ENCODE measurements at regions of chr12 and their contacts with region 1.

Region 1: GRCh38 chr12:52884526-52885293 is 20.2 kb downstream of the KRT8 start:
- DNase-seq: peak; percentile 87
- H3K4me3 Mint-ChIP-seq: no peak overlapping the region
- H3K27ac Mint-ChIP-seq: no peak overlapping the region
- H3K4me1 Mint-ChIP-seq: peaks cover 7% of the 10 kb centered on the region
- H3K27me3 Mint-ChIP-seq: peaks cover 2% of the 10 kb centered on the region

Region 2: DNA sequence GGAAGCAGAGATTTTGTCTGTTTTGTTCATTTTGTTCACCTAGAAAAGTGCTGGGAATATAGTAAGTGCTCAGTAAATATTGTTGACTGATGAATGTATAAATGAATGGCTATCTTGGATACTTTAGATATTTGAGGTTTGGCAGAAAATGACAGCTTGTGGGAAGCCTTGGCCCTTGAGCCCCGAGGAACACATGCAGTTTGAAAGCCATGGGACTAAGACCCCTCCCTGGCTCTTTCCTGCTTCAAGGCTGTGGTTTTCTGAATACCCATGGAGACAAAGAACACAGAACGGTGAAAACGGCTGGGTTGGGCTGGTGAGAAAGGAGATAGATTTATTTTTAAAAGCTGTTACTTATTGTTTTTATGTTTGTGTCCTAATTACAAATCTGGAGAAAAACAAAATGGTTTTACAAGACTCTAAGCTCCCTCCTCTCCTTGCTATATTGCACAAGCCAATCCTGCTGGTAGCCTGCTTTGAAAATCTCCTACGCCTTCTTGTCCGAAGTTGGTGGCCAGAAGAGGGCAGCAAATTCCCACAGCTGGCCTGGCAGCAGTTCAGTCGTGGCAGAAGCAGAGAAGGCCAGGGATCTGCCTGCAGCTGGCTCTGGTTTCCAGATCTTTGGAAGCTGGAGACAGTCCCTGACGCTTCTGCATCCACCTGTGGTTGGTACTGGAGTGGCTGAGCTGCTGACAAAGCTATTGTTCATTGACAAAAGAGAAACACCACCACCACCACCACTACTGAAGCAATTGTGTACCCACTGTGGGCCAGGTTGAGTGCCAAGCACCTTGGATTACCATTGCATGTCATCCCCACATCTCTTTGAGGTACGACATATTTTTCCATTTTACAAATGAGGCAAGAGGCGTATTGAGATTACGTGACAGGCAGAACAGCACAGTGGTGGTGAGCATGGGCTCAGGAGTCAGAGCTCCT is 512.2 kb before region 1 on chr12:
- CTCF ChIA-PET with region 1: interaction called, 39 read pairs
- POLR2A ChIA-PET with region 1: no interaction called
- intact Hi-C with region 1: loop called (anchors 5 kb)
- DNase-seq: peak; percentile 68
- H3K4me3 Mint-ChIP-seq: no peak overlapping the region
- H3K27ac Mint-ChIP-seq: no peak overlapping the region
- H3K4me1 Mint-ChIP-seq: no peaks in the 10 kb centered on the region
- H3K27me3 Mint-ChIP-seq: peaks cover 15% of the 10 kb centered on the region

Region 3: DNA sequence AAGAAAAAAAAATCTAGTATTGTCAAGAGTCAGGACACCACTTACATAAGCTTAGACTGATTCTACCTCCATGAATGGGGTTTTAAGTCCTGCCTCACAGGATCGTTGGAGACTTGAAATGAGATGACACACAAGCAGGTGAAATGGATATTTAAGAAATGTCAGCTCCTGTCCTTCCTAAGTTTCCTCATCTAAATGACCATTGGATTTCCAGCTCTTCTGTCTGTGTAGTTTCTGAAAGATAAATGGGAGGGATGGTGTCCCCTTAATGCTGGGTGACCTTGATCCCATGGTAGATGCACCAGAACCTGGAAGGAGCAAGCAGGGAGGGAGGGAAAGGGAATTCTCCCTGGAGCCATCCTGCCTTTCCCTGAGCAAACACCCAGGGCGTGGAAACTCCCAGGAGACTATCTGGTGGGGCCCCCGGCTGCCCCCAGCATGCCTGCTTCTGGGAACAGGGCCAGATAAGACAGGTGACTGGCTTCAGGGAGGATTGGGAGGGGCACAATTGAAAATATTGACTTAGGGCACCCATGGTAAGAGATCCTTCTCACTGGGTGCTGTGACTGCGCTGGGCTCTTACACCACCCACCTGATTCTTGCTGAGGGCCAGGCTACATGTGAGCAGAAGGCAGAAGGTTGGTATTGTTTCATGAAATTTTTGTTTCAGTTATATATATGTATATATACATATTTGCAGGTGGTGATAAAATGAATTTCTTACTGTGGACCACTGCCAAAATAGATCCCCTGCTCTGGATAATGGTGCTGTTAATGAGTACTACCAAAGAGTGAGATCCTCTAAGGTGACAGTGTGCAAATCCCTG is 10.6 kb after region 1 on chr12:
- CTCF ChIA-PET with region 1: interaction called, 39 read pairs
- POLR2A ChIA-PET with region 1: no interaction called
- intact Hi-C with region 1: no loop called
- DNase-seq: no peak
- H3K4me3 Mint-ChIP-seq: no peak overlapping the region
- H3K27ac Mint-ChIP-seq: no peak overlapping the region
- H3K4me1 Mint-ChIP-seq: no peaks in the 10 kb centered on the region
- H3K27me3 Mint-ChIP-seq: peaks cover 4% of the 10 kb centered on the region

Region 4: DNA sequence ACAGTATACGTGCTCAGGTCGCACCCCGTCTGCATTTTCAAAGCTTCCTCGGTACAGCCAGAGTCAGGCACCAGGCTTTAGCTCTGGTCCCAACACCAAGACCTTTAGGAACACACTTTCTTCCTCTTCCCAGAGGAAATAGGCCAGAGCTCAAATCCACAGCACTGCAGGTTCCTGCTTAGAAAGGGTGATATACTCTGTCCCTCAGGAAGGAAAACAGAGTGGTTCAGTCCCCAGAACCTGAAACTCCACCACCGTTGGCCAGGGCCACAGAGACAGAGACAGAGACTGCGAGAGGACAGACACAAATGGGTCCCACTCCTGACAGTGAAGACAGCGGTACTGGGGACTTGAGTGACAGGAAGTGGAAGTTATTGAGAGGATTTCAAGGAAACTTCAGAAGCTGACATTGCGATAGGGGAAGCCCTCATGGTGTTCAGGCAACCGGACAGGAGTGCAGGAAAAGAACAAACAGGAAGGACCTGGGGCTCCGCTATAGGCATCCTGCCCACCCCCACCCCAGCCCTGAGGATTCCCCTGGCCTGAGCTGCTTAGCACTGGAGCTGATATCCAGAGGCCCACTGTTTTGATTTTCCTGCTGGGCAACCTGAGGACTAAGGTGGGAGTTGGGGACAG is 25.7 kb after region 1 on chr12:
- CTCF ChIA-PET with region 1: interaction called, 14 read pairs
- POLR2A ChIA-PET with region 1: no interaction called
- intact Hi-C with region 1: no loop called
- DNase-seq: no peak
- H3K4me3 Mint-ChIP-seq: no peak overlapping the region
- H3K27ac Mint-ChIP-seq: no peak overlapping the region
- H3K4me1 Mint-ChIP-seq: no peaks in the 10 kb centered on the region
- H3K27me3 Mint-ChIP-seq: no peaks in the 10 kb centered on the region

Region 5: GRCh38 chr12:52942066-52942900 is 57.6 kb after region 1 on chr12:
- CTCF ChIA-PET with region 1: interaction called, 24 read pairs
- POLR2A ChIA-PET with region 1: no interaction called
- intact Hi-C with region 1: no loop called
- DNase-seq: no peak
- H3K4me3 Mint-ChIP-seq: no peak overlapping the region
- H3K27ac Mint-ChIP-seq: no peak overlapping the region
- H3K4me1 Mint-ChIP-seq: no peaks in the 10 kb centered on the region
- H3K27me3 Mint-ChIP-seq: no peaks in the 10 kb centered on the region

Region 6: DNA sequence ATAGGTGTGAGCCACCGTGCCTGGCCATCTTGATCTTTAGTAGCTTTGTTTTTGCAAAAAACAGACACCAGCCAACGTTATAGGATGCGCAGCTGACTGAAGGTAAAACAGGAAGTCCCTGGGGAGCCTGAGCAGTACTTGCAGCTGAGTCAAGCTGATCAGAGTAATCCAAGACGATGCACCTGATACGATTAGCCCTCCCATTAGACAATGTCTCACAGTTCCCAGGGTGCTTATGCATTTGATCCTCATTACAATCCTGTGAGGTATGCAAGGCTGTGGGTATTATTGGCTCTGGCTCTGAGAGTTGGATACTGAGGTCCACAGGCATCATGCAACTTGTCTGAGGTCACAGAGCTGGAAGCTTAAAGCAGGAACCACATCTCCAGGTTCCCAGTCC is 72.3 kb after region 1 on chr12:
- CTCF ChIA-PET with region 1: interaction called, 37 read pairs
- POLR2A ChIA-PET with region 1: no interaction called
- intact Hi-C with region 1: no loop called
- DNase-seq: no peak
- H3K4me3 Mint-ChIP-seq: no peak overlapping the region
- H3K27ac Mint-ChIP-seq: no peak overlapping the region
- H3K4me1 Mint-ChIP-seq: no peaks in the 10 kb centered on the region
- H3K27me3 Mint-ChIP-seq: peaks cover 1% of the 10 kb centered on the region

Region 7: GRCh38 chr12:52992699-52993557 is 108.2 kb after region 1 on chr12:
- CTCF ChIA-PET with region 1: interaction called, 557 read pairs
- POLR2A ChIA-PET with region 1: no interaction called
- intact Hi-C with region 1: no loop called
- DNase-seq: no peak
- H3K4me3 Mint-ChIP-seq: no peak overlapping the region
- H3K27ac Mint-ChIP-seq: no peak overlapping the region
- H3K4me1 Mint-ChIP-seq: no peaks in the 10 kb centered on the region
- H3K27me3 Mint-ChIP-seq: no peaks in the 10 kb centered on the region

Measured in activated CD4-positive, alpha-beta memory T cell treated with anti-CD3 and anti-CD28 coated beads for 36 hours (primary cell).